Activated T-helper 1 cell treated with anti-CD3 and anti-CD28 coated beads, Interleukin-12 subunit alpha, Interleukin-12 subunit beta, Interleukin-2, Interleukin-4 antibody, amounts not matched to agents 30 ng/mL and 10 ng/mL and 1 ng/mL, durations not matched to agents 14 hours and 24 hours and 36 hours (primary cell): ENCODE measurements at regions of chr9 and their contacts with region 1.

Region 1: GRCh38 chr9:3804103-3804502 is 278.3 kb upstream of the RFX3 start:
- DNase-seq: no peak
- H3K4me3 Mint-ChIP-seq: no peak overlapping the region
- H3K27ac Mint-ChIP-seq: no peak overlapping the region
- H3K4me1 Mint-ChIP-seq: no peaks in the 10 kb centered on the region
- H3K27me3 Mint-ChIP-seq: peaks cover 4% of the 10 kb centered on the region

Region 2: GRCh38 chr9:3830291-3830690 is 26.2 kb after region 1 on chr9:
- intact Hi-C with region 1: loop called (anchors 2 kb)
- DNase-seq: no peak
- H3K4me3 Mint-ChIP-seq: no peak overlapping the region
- H3K27ac Mint-ChIP-seq: no peak overlapping the region
- H3K4me1 Mint-ChIP-seq: no peaks in the 10 kb centered on the region
- H3K27me3 Mint-ChIP-seq: no peaks in the 10 kb centered on the region

Region 3: DNA sequence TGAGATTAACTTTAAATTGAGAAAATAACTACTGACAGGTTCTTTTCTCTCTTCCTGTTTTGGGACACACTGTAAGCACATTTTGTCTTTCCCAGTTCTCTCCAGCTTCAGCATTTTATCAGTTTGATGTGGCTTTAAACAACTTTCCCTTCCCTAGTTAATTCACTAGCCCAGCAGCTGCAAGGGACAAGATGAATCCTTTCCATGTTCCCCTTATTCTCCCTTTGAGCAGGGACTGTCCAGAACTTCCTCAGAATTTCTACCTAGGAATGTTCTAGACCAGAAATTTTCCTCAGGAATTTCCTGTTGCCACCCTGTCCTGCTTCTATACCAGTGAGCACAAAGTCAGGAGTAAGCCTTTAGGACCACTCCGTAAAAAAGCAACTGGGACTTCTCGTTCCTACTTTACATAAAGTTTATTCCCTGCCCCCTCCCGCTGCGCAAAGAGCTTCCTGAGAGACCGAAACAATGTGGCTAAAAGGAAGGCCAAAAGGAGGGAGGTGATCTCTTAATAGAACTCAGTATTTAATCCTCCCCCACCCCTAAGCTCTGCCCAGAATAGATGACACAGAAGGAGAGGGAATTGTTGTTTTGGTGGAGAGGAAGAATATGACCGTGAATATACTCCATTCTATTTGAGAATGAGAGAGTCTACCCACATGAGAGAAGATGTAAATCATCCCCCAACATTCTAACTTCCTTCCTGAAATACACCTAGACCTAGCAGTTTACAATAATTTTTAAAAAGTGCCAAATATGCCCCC is 433.8 kb after region 1 on chr9:
- intact Hi-C with region 1: no loop called
- DNase-seq: no peak
- H3K4me3 Mint-ChIP-seq: peak overlapping the region; percentile 20
- H3K27ac Mint-ChIP-seq: no peak overlapping the region
- H3K4me1 Mint-ChIP-seq: peaks cover 13% of the 10 kb centered on the region
- H3K27me3 Mint-ChIP-seq: peaks cover 1% of the 10 kb centered on the region